Activated CD4-positive, alpha-beta memory T cell treated with anti-CD3 and anti-CD28 coated beads for 36 hours (primary cell): ENCODE measurements at regions of chr13 and their contacts with region 1.

Region 1: DNA sequence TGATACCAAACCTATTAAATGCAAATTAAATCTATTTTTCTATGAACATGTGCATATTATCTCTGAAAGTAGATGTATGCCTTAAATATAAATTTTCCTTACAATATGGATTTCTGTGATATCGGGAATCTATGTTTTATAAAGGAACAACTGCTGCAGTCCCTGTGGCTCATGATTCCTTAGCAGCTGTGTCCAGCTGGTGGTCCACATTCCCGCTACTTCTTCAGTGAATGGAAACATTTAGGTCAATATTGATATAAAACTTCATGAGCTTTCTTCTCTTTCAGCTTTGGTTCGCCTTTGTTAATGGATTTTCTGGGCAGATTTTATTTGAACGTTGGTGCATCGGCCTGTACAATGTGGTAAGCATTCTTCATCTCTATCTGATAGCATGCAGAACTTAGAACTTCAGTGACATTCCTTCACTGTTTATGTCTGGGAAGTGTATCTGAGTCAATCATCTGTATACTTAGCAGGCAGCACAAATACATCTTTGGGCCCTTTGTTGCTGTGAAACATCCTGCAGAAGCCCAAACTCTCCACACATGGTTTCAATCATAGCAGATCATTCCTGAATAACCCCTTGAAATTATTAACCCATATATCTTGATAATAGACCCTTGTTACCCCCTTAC is 223.9 kb downstream of the SHISA2 start:
- DNase-seq: no peak
- H3K4me3 Mint-ChIP-seq: no peak overlapping the region
- H3K27ac Mint-ChIP-seq: no peak overlapping the region
- H3K4me1 Mint-ChIP-seq: no peaks in the 10 kb centered on the region
- H3K27me3 Mint-ChIP-seq: peaks cover 3% of the 10 kb centered on the region

Region 2: GRCh38 chr13:24911135-24911908 is 916.6 kb before region 1 on chr13:
- CTCF ChIA-PET with region 1: no interaction called
- POLR2A ChIA-PET with region 1: no interaction called
- intact Hi-C with region 1: no loop called
- DNase-seq: peak; percentile 29
- H3K4me3 Mint-ChIP-seq: no peak overlapping the region
- H3K27ac Mint-ChIP-seq: no peak overlapping the region
- H3K4me1 Mint-ChIP-seq: peaks cover 6% of the 10 kb centered on the region
- H3K27me3 Mint-ChIP-seq: no peaks in the 10 kb centered on the region

Region 3: DNA sequence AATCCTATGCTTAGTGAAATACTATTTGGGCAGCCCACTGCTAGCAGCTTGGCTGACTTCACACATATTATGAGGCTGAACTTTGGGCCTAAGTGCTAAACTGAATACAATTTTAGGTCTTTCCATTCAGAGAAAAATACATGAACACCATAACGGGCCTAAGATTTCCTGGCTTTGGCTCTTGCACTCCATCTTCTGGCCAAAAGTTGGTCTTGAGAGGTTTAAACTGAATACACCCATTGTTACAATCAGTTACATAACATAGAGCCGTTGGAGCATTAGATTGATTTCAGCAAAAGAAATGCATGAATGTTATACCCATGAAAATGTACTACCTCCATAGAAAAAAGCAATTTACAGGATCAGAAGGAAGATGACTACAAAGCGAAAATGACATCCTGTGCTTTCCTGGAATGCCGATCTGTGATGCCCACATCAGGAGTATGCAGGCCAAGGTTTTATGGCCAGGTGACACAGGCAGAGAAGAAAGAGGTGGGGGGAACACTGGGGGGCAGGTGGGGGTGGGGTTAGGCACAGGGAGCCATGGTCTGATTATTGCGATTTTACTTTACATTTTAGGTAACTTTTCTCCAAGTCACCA is 235.0 kb after region 1 on chr13:
- CTCF ChIA-PET with region 1: interaction called, 15 read pairs
- POLR2A ChIA-PET with region 1: no interaction called
- intact Hi-C with region 1: loop called (anchors 1 kb)
- DNase-seq: peak; percentile 43
- H3K4me3 Mint-ChIP-seq: no peak overlapping the region
- H3K27ac Mint-ChIP-seq: no peak overlapping the region
- H3K4me1 Mint-ChIP-seq: no peaks in the 10 kb centered on the region
- H3K27me3 Mint-ChIP-seq: peaks cover 1% of the 10 kb centered on the region